Aorta (tissue), 5 donors: ENCODE measurements at regions of chr3 and their contacts with region 1.

Region 1: GRCh38 chr3:82643948-82644347 is 882.5 kb upstream of the GBE1 start:
- DNase-seq: no peak
- ATAC-seq: no peak
- H3K4me3 ChIP-seq: no peak overlapping the region
- H3K27ac ChIP-seq: no peak overlapping the region
- H3K4me1 ChIP-seq: no peaks in the 10 kb centered on the region
- H3K27me3 ChIP-seq: no peaks in the 10 kb centered on the region

Region 2: DNA sequence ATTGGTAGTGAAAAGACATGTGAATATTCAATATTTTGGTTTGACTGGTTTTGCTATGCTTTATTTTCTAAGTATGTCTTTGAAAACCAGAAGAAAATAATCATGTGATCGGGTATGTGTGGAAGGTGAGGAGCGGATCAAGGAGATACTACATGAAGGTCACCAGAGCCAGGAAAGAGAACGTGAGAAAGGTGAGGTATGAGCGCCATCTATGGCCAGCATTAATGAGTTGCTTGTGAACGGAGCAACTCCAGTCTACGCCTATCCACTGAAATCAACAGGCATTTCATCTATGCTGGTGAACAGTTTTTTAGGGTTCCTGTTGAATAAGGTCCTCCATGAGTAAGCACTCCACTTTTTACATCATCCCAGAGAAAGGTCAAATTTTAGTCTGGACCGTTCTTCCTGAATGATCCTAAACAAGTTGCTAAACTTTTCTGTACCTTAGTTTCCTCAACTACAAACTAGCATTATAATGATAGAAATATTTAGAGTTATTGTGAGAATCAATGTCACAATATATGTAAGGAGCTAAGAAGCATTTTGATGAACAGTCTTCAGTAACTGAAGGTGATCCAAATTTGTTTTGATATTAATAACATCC is 879.6 kb after region 1 on chr3:
- intact Hi-C with region 1: loop called in 1 of 2 experiments (anchors 10 kb)
- DNase-seq: no peak
- ATAC-seq: no peak
- H3K4me3 ChIP-seq: no peak overlapping the region
- H3K27ac ChIP-seq: no peak overlapping the region
- H3K4me1 ChIP-seq: no peaks in the 10 kb centered on the region
- H3K27me3 ChIP-seq: no peaks in the 10 kb centered on the region